ENCODE measurements at regions of chr7 and their contacts with region 1.

Region 1: GRCh38 chr7:41292487-41292886 is 410.4 kb downstream of the INHBA start:
- DNase-seq: no peak
- H3K4me3 Mint-ChIP-seq: no peak overlapping the region
- H3K27ac Mint-ChIP-seq: no peak overlapping the region
- H3K4me1 Mint-ChIP-seq: no peaks in the 10 kb centered on the region
- H3K27me3 Mint-ChIP-seq: no peaks in the 10 kb centered on the region
- CTCF ChIP-seq: no peak

Region 2: GRCh38 chr7:40765639-40766038 is 526.8 kb before region 1 on chr7:
- CTCF ChIA-PET with region 1: no interaction called
- intact Hi-C with region 1: no loop called
- DNase-seq: no peak
- H3K4me3 Mint-ChIP-seq: no peak overlapping the region
- H3K27ac Mint-ChIP-seq: no peak overlapping the region
- H3K4me1 Mint-ChIP-seq: peaks cover 8% of the 10 kb centered on the region
- H3K27me3 Mint-ChIP-seq: no peaks in the 10 kb centered on the region
- CTCF ChIP-seq: no peak

Region 3: GRCh38 chr7:41217306-41217705 is 75.2 kb before region 1 on chr7:
- CTCF ChIA-PET with region 1: no interaction called
- intact Hi-C with region 1: no loop called
- DNase-seq: no peak
- H3K4me3 Mint-ChIP-seq: no peak overlapping the region
- H3K27ac Mint-ChIP-seq: no peak overlapping the region
- H3K4me1 Mint-ChIP-seq: peaks cover 5% of the 10 kb centered on the region
- H3K27me3 Mint-ChIP-seq: no peaks in the 10 kb centered on the region
- CTCF ChIP-seq: no peak

Region 4: GRCh38 chr7:41333511-41333910 is 41.0 kb after region 1 on chr7:
- CTCF ChIA-PET with region 1: no interaction called
- intact Hi-C with region 1: no loop called
- DNase-seq: no peak
- H3K4me3 Mint-ChIP-seq: no peak overlapping the region
- H3K27ac Mint-ChIP-seq: no peak overlapping the region
- H3K4me1 Mint-ChIP-seq: no peaks in the 10 kb centered on the region
- H3K27me3 Mint-ChIP-seq: no peaks in the 10 kb centered on the region
- CTCF ChIP-seq: no peak

Region 5: GRCh38 chr7:41391818-41392217 is 99.3 kb after region 1 on chr7:
- CTCF ChIA-PET with region 1: interaction called, 12 read pairs
- intact Hi-C with region 1: no loop called
- DNase-seq: no peak
- H3K4me3 Mint-ChIP-seq: no peak overlapping the region
- H3K27ac Mint-ChIP-seq: no peak overlapping the region
- H3K4me1 Mint-ChIP-seq: no peaks in the 10 kb centered on the region
- H3K27me3 Mint-ChIP-seq: no peaks in the 10 kb centered on the region
- CTCF ChIP-seq: no peak

Region 6: DNA sequence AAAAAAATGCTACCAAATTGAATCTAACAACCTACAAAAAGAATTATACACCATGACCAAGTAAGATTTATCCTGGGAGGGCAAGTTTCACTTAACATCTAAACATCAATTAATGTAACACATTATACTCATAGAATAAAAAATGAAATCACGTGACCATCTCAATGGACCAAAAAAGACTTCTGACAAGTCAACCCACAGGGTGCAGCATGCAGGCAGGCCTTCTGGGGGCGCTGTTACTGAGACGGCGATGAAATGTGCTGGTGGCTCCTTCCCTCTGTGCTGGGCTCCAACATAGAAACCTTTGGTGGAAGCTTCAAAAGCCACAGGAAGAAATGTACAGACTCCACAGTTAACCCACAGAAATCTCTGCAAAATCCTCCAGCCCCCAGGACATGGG is 307.3 kb after region 1 on chr7:
- CTCF ChIA-PET with region 1: no interaction called
- intact Hi-C with region 1: no loop called
- DNase-seq: peak; percentile 21
- H3K4me3 Mint-ChIP-seq: no peak overlapping the region
- H3K27ac Mint-ChIP-seq: no peak overlapping the region
- H3K4me1 Mint-ChIP-seq: no peaks in the 10 kb centered on the region
- H3K27me3 Mint-ChIP-seq: no peaks in the 10 kb centered on the region
- CTCF ChIP-seq: peak; percentile 30